K562 (cell line): ENCODE measurements at regions of chr5 and their contacts with region 1.

Region 1: GRCh38 chr5:104178829-104179456 is 616.4 kb upstream of the NUDT12 start:
- DNase-seq: peak; percentile 71 to 86 (median 75)
- ATAC-seq: peak; percentile 100
- H3K4me3 ChIP-seq: no peak overlapping the region
- H3K27ac ChIP-seq: no peak overlapping the region
- H3K4me1 ChIP-seq: no peaks in the 10 kb centered on the region
- H3K27me3 ChIP-seq: no peaks in the 10 kb centered on the region
- CTCF ChIP-seq: peak; percentile 77 to 85 (median 77)
- EP300 ChIP-seq: no peak
- POLR2A ChIP-seq: no peak
- RAD21 ChIP-seq: peak; percentile 84 to 95

Region 2: GRCh38 chr5:103598997-103599566 is 579.9 kb before region 1 on chr5:
- CTCF ChIA-PET with region 1: no interaction called
- POLR2A ChIA-PET with region 1: no interaction called
- in situ Hi-C with region 1: loop called (anchors 10 kb)
- intact Hi-C with region 1: no loop called
- DNase-seq: no peak
- ATAC-seq: no peak
- H3K4me3 ChIP-seq: no peak overlapping the region
- H3K27ac ChIP-seq: no peak overlapping the region
- H3K4me1 ChIP-seq: no peaks in the 10 kb centered on the region; a peak in 1 of 5 replicates
- H3K27me3 ChIP-seq: no peaks in the 10 kb centered on the region
- CTCF ChIP-seq: no peak
- EP300 ChIP-seq: no peak
- POLR2A ChIP-seq: no peak
- RAD21 ChIP-seq: no peak

Region 3: GRCh38 chr5:103829585-103829984 is 349.4 kb before region 1 on chr5:
- CTCF ChIA-PET with region 1: interaction called, 4 read pairs
- POLR2A ChIA-PET with region 1: no interaction called
- in situ Hi-C with region 1: loop called (anchors 10 kb)
- intact Hi-C with region 1: loop called (anchors 1 kb)
- DNase-seq: peak; percentile 15 to 33 (median 17)
- ATAC-seq: peak; percentile 41; the same call in 1 of the 3 replicates
- H3K4me3 ChIP-seq: no peak overlapping the region
- H3K27ac ChIP-seq: no peak overlapping the region
- H3K4me1 ChIP-seq: no peaks in the 10 kb centered on the region
- H3K27me3 ChIP-seq: no peaks in the 10 kb centered on the region
- CTCF ChIP-seq: peak; percentile 26 to 60 (median 55); a peak in 5 of 6 replicates
- EP300 ChIP-seq: no peak
- POLR2A ChIP-seq: no peak
- RAD21 ChIP-seq: peak in 1 of 2 experiments; percentile 32; a peak in 1 of 4 replicates

Region 4: DNA sequence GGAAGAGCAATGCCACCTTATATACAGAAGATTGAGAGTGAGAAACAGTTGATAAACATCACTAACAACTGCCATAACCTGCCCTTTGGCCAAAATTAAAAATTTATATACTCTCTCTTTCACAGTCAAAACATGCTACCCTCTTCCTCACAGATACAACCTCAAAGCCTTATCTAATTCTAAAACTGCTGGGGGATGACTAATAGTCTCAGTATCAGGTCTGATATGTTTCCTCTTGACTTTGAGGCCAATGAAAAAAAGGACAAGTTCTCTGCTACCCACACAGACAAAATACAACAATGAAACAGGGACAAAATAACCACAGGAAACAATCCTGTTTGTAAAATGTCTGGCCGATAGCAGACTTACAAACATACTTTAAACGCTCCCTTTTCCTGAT is 130.7 kb before region 1 on chr5:
- CTCF ChIA-PET with region 1: no interaction called
- POLR2A ChIA-PET with region 1: no interaction called
- in situ Hi-C with region 1: no loop called
- intact Hi-C with region 1: loop called (anchors 2 kb)
- DNase-seq: no peak
- ATAC-seq: no peak
- H3K4me3 ChIP-seq: no peak overlapping the region
- H3K27ac ChIP-seq: no peak overlapping the region
- H3K4me1 ChIP-seq: no peaks in the 10 kb centered on the region; a peak in 1 of 5 replicates
- H3K27me3 ChIP-seq: peaks cover 0 to 7% of the 10 kb centered on the region in 2 experiments; a peak in 2 of 5 replicates
- CTCF ChIP-seq: no peak
- EP300 ChIP-seq: no peak
- POLR2A ChIP-seq: no peak
- RAD21 ChIP-seq: no peak